Activated CD8-positive, alpha-beta T cell treated with anti-CD3 and anti-CD28 coated beads for 36 hours (primary cell): ENCODE measurements at regions of chr10 and their contacts with region 1.

Region 1: GRCh38 chr10:21265621-21266020 is 259.9 kb downstream of the SKIDA1 start:
- DNase-seq: no peak
- ATAC-seq: no peak
- H3K4me3 Mint-ChIP-seq: no peak overlapping the region
- H3K27ac Mint-ChIP-seq: no peak overlapping the region
- H3K4me1 Mint-ChIP-seq: no peaks in the 10 kb centered on the region
- H3K27me3 Mint-ChIP-seq: peaks cover under 1% of the 10 kb centered on the region
- CTCF ChIP-seq: no peak

Region 2: GRCh38 chr10:20858292-20859124 is 407.1 kb before region 1 on chr10:
- CTCF ChIA-PET with region 1: no interaction called
- POLR2A ChIA-PET with region 1: no interaction called
- intact Hi-C with region 1: loop called (anchors 10 kb)
- DNase-seq: no peak
- ATAC-seq: no peak
- H3K4me3 Mint-ChIP-seq: no peak overlapping the region
- H3K27ac Mint-ChIP-seq: no peak overlapping the region
- H3K4me1 Mint-ChIP-seq: no peaks in the 10 kb centered on the region
- H3K27me3 Mint-ChIP-seq: no peaks in the 10 kb centered on the region
- CTCF ChIP-seq: peak; percentile 56

Region 3: GRCh38 chr10:21160116-21160515 is 105.5 kb before region 1 on chr10:
- CTCF ChIA-PET with region 1: no interaction called
- POLR2A ChIA-PET with region 1: no interaction called
- intact Hi-C with region 1: no loop called
- DNase-seq: no peak
- ATAC-seq: no peak
- H3K4me3 Mint-ChIP-seq: no peak overlapping the region
- H3K27ac Mint-ChIP-seq: no peak overlapping the region
- H3K4me1 Mint-ChIP-seq: no peaks in the 10 kb centered on the region
- H3K27me3 Mint-ChIP-seq: peaks cover 3% of the 10 kb centered on the region
- CTCF ChIP-seq: no peak

Region 4: DNA sequence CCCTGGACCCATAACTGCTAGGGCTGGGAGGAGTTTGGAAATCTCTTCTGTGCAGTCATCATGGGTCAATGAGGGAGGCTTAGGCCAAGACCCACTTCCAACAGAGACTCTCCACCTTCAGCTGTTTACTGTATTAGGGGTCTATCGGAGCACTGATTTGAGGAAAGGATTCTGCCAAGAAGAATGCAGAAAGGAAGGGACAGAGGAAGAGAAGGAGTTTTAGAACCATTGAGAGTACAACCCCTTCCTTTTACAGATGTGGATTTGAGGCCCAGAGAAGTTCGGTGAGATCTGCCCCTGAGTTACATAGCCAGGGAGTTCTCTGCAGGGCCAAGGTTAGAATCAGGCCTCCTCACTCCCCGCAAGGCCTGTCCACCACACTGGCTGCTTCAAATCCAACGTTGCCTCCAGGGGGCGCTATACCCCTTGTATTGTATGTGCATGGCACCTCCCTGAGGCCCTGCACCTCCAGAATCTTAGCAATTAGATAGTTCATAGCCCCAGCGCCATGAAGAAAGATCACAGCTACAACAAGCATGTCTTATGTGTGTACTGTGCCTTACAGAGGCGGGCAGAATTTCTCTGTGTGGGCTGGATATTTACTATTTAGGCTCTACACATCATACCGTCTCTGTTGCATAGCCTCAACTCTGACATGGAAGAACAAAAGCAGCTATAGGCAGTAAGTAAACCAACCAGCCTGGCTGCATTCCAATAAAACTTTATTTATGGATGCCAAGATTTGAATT is 13.0 kb after region 1 on chr10:
- CTCF ChIA-PET with region 1: no interaction called
- POLR2A ChIA-PET with region 1: no interaction called
- intact Hi-C with region 1: no loop called
- DNase-seq: peak; percentile 92
- ATAC-seq: peak; percentile 78
- H3K4me3 Mint-ChIP-seq: no peak overlapping the region
- H3K27ac Mint-ChIP-seq: no peak overlapping the region
- H3K4me1 Mint-ChIP-seq: no peaks in the 10 kb centered on the region
- H3K27me3 Mint-ChIP-seq: peaks cover 3% of the 10 kb centered on the region
- CTCF ChIP-seq: peak; percentile 71